MCF 10A (cell line): ENCODE measurements at regions of chr15 and their contacts with region 1.

Region 1: GRCh38 chr15:62138124-62138523 is 27.0 kb downstream of the C2CD4B start:
- DNase-seq: peak; percentile 86
- H3K4me3 Mint-ChIP-seq: no peak overlapping the region
- H3K27ac Mint-ChIP-seq: peak overlapping the region; percentile 43
- H3K4me1 Mint-ChIP-seq: peaks cover 52% of the 10 kb centered on the region
- H3K27me3 Mint-ChIP-seq: no peaks in the 10 kb centered on the region
- CTCF ChIP-seq: no peak

Region 2: DNA sequence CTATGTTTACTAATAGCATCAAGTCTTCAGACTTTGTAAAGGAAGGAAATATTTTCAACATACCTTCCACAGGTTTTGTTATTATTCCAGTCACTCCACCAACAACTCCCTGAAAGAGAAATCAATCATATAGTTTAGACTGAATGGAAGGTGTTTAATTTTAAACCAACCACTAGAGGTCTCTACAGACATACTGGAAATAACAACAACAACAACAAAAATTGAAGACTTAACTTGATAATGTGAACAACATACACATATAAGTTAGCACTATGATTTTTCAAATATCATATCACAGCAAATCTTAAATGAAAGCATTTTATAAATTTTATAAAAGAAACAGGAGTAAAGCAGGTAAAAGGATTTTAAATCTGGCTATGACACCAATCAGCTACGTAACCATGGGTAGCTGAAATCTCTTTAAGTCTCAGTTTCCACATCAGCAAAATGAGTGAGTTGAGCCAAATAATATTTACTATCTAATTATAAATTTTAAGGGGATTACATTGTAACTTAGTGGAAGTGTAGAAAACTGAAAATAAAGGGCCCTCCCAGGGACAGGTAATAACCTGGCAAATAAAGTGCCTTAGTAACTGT is 266.1 kb before region 1 on chr15:
- CTCF ChIA-PET with region 1: no interaction called
- POLR2A ChIA-PET with region 1: no interaction called
- intact Hi-C with region 1: loop called (anchors 1 kb)
- DNase-seq: peak; percentile 38
- H3K4me3 Mint-ChIP-seq: no peak overlapping the region
- H3K27ac Mint-ChIP-seq: peak overlapping the region; percentile 31
- H3K4me1 Mint-ChIP-seq: no peaks in the 10 kb centered on the region
- H3K27me3 Mint-ChIP-seq: no peaks in the 10 kb centered on the region
- CTCF ChIP-seq: peak; percentile 54

Region 3: GRCh38 chr15:62021991-62022600 is 116.0 kb before region 1 on chr15:
- CTCF ChIA-PET with region 1: no interaction called
- POLR2A ChIA-PET with region 1: no interaction called
- intact Hi-C with region 1: no loop called
- DNase-seq: peak; percentile 14
- H3K4me3 Mint-ChIP-seq: no peak overlapping the region
- H3K27ac Mint-ChIP-seq: no peak overlapping the region
- H3K4me1 Mint-ChIP-seq: no peaks in the 10 kb centered on the region
- H3K27me3 Mint-ChIP-seq: no peaks in the 10 kb centered on the region
- CTCF ChIP-seq: peak; percentile 29

Region 4: DNA sequence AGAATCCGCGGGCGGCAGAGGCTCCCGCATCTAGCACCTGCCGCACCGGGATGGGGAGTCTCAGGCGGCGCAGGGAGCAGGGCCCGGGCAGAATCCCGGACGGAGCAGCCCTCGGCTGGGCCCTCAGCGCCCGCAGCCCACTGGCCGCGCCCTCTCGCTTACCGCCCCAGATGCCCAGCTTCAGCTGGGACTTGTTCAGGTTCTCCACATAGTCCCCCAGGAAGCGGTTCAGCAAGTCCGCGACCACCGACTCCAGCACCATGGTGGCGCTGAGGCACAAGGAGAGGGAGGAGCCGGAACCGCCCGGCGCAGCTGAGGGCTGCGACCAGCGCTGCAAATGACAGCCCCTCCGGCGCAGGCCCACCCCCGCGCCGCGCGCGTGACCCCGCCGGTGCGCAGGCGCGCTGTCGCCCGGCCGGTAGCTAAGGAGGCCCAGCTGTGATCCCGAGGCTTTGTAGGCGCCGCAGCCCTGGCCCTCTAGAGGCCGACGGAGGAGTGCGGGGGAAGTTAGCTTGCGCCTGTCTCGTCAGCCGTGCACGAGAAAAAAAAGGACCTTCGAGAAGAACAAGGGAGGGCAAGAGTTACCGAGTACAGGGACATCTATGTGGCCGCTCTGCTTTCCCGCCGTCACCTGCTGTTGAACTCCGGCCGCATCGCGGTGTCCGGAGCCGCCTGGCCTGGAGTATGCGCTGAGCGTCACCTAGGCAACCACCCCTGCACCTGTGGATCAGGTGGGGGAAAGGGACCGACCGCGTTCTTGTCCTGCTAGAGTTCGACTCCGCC is 77.8 kb before region 1 on chr15 and contains the start of gene VPS13C:
- CTCF ChIA-PET with region 1: interaction called, 7 read pairs
- POLR2A ChIA-PET with region 1: interaction called, 14 read pairs
- intact Hi-C with region 1: loop called (anchors 5 kb)
- DNase-seq: peak; percentile 90
- H3K4me3 Mint-ChIP-seq: peak within 1 kb of the TSS; percentile 88
- H3K27ac Mint-ChIP-seq: peak within 1 kb of the TSS; percentile 86
- H3K4me1 Mint-ChIP-seq: peaks cover 28% of the 10 kb centered on the region
- H3K27me3 Mint-ChIP-seq: no peaks in the 10 kb centered on the region
- CTCF ChIP-seq: peak; percentile 69
- total RNA-seq, gene VPS13C: 47.4 and 58.7 TPM in 2 replicates

Region 5: GRCh38 chr15:62119227-62119864 is 18.8 kb before region 1 on chr15:
- CTCF ChIA-PET with region 1: interaction called, 4 read pairs
- POLR2A ChIA-PET with region 1: interaction called, 12 read pairs
- intact Hi-C with region 1: no loop called
- DNase-seq: peak; percentile 94
- H3K4me3 Mint-ChIP-seq: peak overlapping the region; percentile 61
- H3K27ac Mint-ChIP-seq: peak overlapping the region; percentile 86
- H3K4me1 Mint-ChIP-seq: peaks cover 29% of the 10 kb centered on the region
- H3K27me3 Mint-ChIP-seq: no peaks in the 10 kb centered on the region
- CTCF ChIP-seq: no peak